MCF 10A (cell line): ENCODE measurements at regions of chr12 and their contacts with region 1.

Region 1: GRCh38 chr12:9001233-9001632 is 11.9 kb downstream of the KLRG1 start:
- DNase-seq: no peak
- H3K4me3 Mint-ChIP-seq: no peak overlapping the region
- H3K27ac Mint-ChIP-seq: no peak overlapping the region
- H3K4me1 Mint-ChIP-seq: no peaks in the 10 kb centered on the region
- H3K27me3 Mint-ChIP-seq: no peaks in the 10 kb centered on the region
- CTCF ChIP-seq: no peak

Region 2: GRCh38 chr12:8449293-8449945 is 551.8 kb before region 1 on chr12:
- CTCF ChIA-PET with region 1: no interaction called
- POLR2A ChIA-PET with region 1: no interaction called
- intact Hi-C with region 1: no loop called
- DNase-seq: no peak
- H3K4me3 Mint-ChIP-seq: no peak overlapping the region
- H3K27ac Mint-ChIP-seq: no peak overlapping the region
- H3K4me1 Mint-ChIP-seq: no peaks in the 10 kb centered on the region
- H3K27me3 Mint-ChIP-seq: peaks cover 9% of the 10 kb centered on the region
- CTCF ChIP-seq: no peak

Region 3: GRCh38 chr12:8914716-8915526 is 86.3 kb before region 1 on chr12:
- CTCF ChIA-PET with region 1: no interaction called
- POLR2A ChIA-PET with region 1: no interaction called
- intact Hi-C with region 1: loop called (anchors 10 kb)
- DNase-seq: peak; percentile 61
- H3K4me3 Mint-ChIP-seq: no peak overlapping the region
- H3K27ac Mint-ChIP-seq: no peak overlapping the region
- H3K4me1 Mint-ChIP-seq: peaks cover 16% of the 10 kb centered on the region
- H3K27me3 Mint-ChIP-seq: no peaks in the 10 kb centered on the region
- CTCF ChIP-seq: no peak

Region 4: GRCh38 chr12:8936735-8937134 is 64.5 kb before region 1 on chr12:
- CTCF ChIA-PET with region 1: no interaction called
- POLR2A ChIA-PET with region 1: no interaction called
- intact Hi-C with region 1: no loop called
- DNase-seq: no peak
- H3K4me3 Mint-ChIP-seq: no peak overlapping the region
- H3K27ac Mint-ChIP-seq: no peak overlapping the region
- H3K4me1 Mint-ChIP-seq: no peaks in the 10 kb centered on the region
- H3K27me3 Mint-ChIP-seq: no peaks in the 10 kb centered on the region
- CTCF ChIP-seq: no peak